ENCODE measurements at regions of chr6 and their contacts with region 1.

Region 1: DNA sequence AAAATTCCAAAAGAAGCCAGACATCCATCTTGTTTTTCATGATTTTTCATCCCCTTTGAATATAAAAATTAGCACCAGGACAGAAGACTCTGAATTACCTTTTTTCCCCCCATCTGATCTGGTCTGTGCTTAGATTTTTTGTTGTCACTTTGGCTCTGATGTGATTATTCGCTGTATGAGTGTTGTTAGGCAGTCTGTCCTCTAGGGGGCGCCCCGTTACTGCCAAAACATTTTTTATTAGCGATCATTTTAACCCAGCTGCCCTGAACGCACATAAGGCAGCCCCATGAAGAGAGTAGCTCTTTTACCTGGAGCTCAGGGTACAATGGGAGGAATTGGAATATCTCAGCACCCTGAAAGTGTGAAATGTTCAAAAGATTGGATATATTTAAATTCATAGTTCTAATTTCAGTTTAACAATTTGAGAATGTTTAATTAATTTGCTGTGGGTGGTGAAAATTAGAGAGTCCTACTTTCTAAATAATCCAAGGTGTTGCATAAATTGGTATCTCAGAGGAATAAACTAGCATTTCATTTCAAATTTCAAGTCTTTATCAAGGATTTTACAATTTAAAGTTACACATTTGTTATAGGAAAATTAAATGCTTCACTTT is 60.8 kb downstream of the PRPH2 start:
- DNase-seq: peak; percentile 86

Region 2: GRCh38 chr6:42618686-42619085 is 43.0 kb before region 1 on chr6:
- intact Hi-C with region 1: no loop called
- DNase-seq: no peak

Region 3: DNA sequence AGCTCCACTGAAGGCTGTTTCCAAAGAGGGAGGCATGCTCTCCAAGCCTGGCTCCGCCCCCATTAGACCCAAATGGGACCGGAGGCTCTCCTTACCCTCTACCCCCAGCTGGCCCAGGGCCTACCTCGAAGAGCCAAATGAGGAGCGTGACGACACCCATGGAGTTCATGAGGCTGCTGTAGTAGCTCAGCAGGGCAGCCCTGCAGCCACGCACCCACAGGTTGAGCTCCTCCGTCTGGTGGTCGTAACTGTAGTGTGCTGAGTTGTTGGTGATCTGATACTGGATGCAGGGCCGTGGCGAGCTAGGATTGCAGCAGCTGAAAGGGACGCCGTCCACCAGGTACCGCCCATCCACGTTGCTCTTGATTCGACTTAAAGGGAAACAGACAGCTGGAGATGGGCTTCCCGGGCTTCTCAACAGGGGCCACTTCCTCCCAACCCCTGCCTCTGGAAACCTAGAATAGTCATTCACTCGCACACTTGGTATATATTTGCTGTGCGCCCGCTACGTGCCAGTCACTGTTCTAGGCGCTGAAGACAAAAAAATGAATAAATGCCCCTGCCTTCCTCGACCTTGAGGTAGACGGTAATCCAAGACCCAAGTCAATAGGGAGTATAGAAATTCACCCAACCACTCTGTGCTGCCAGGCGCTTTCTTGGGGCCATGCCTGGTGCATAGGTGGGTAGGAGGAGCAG is 42.7 kb after region 1 on chr6:
- intact Hi-C with region 1: no loop called
- DNase-seq: no peak

Region 4: DNA sequence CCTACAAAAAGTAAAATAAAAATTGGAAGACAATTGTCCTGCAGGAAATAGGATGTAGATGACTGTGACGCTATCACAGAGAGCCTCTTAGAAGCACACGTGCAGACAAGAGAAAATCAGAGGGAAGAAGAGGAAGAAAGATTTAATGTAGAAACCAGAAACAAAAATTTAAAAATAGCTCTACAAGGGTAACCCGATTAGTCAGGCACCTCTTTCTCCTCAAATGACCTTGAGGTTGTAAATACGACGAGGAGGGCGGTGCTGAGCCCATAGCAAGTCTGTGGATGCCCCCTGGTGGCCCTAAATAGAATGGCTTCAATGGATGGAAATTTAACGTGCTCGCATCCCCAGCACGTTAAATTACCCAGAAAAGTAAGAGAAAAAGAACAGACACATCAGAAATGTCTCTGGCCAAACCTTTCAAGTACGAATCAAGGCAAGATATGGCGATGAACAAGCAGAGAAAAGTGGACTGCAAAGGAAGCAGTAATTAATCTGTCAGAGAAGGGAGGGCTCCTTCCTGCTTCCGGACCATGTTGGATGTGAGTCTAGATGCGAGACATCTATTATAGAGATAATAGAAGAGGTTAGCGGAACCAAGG is 64.9 kb after region 1 on chr6:
- intact Hi-C with region 1: loop called (anchors 5 kb)
- DNase-seq: peak; percentile 85